H1 (cell line): ENCODE measurements at regions of chr1 and their contacts with region 1.

Region 1: GRCh38 chr1:145891587-145892485 is 6.2 kb upstream of the ANKRD35 start:
- DNase-seq: peak; percentile 94 to 96
- H3K4me3 ChIP-seq: peak overlapping the region in 3 of 4 experiments; percentile 2 to 48 (median 3); a peak in 4 of 8 replicates
- H3K27ac ChIP-seq: no peak overlapping the region
- H3K4me1 ChIP-seq: peaks cover 0 to 6% (median 4%) of the 10 kb centered on the region in 4 experiments; a peak in 3 of 7 replicates
- H3K27me3 ChIP-seq: no peaks in the 10 kb centered on the region
- CTCF ChIP-seq: peak; percentile 84 to 99 (median 99)
- EP300 ChIP-seq: no peak
- POLR2A ChIP-seq: peak in 1 of 2 experiments; percentile 27; a peak in 1 of 3 replicates
- RAD21 ChIP-seq: peak; percentile 96 to 99

Region 2: DNA sequence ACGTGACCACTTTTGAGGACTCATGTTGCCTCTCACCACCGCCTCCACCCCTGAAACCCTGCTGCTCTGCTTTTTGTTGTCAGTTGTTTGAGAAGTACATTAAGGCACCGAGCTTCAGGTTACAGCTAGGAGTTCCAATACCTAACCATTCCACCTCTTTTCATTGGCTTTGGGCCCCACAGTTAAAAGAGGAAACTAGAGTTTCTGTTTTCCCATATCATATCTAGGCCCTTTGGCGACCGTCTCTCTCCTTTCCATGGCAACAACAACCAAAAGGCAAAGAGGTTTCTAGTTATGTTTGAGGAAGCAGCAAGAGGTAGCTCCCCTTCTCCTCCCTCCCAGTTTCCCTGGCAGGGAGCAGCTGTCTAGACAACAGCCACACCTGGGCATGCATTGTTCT is 12.1 kb before region 1 on chr1:
- CTCF ChIA-PET with region 1: interaction called, 62 read pairs
- POLR2A ChIA-PET with region 1: interaction called, 4 read pairs
- DNase-seq: no peak
- H3K4me3 ChIP-seq: no peak overlapping the region
- H3K27ac ChIP-seq: no peak overlapping the region
- H3K4me1 ChIP-seq: peaks cover 0 to 10% (median 6%) of the 10 kb centered on the region in 4 experiments; a peak in 4 of 7 replicates
- H3K27me3 ChIP-seq: peaks cover 0 to 12% (median 8%) of the 10 kb centered on the region in 4 experiments; a peak in 6 of 7 replicates
- CTCF ChIP-seq: no peak
- EP300 ChIP-seq: no peak
- POLR2A ChIP-seq: no peak
- RAD21 ChIP-seq: no peak

Region 3: GRCh38 chr1:145927063-145927886 is 35.4 kb after region 1 on chr1 and contains the start of gene RBM8A:
- CTCF ChIA-PET with region 1: interaction called, 16 read pairs
- POLR2A ChIA-PET with region 1: interaction called, 5 read pairs
- DNase-seq: peak; percentile 85 to 91
- H3K4me3 ChIP-seq: peak within 1 kb of the TSS; percentile 81 to 97 (median 92)
- H3K27ac ChIP-seq: peak within 1 kb of the TSS; percentile 90
- H3K4me1 ChIP-seq: peaks cover 0 to 4% (median 2%) of the 10 kb centered on the region in 4 experiments; a peak in 4 of 7 replicates
- H3K27me3 ChIP-seq: no peaks in the 10 kb centered on the region
- CTCF ChIP-seq: peak; percentile 27 to 61 (median 47); a peak in 3 of 4 replicates
- EP300 ChIP-seq: no peak
- POLR2A ChIP-seq: peak; percentile 88 to 92
- RAD21 ChIP-seq: no peak
- total RNA-seq, gene RBM8A: 216 and 222 TPM in 2 replicates

Region 4: DNA sequence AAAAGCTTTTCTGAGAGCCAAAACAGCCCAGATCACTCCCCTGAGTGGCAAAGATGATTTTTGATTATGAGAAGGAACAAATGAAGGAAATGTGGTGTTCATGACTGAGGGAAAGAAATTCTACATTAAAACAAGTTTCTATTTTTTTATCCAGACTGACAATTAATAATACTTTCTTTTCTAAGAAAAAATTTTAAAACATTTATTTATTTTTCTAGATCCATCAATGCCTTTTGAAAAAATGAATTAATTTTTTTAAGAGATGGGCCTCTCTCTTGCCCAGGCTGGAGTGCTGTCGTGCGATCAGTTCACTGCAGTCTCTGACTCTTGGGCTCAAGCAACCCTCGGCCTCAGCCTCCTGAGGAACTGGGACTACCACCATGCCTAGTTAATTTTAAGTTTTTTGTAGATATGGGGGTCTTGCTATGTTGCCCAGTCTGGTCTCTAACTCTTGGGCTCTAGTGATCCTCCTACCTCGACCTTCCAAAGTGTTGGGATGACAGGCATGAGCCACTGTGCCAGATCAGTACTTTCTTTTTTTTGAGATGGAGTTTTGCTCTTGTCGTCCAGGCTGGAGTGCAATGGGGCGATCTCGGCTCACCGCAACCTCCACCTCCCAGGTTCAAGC is 115.8 kb after region 1 on chr1:
- CTCF ChIA-PET with region 1: interaction called, 17 read pairs
- POLR2A ChIA-PET with region 1: no interaction called
- DNase-seq: no peak
- H3K4me3 ChIP-seq: no peak overlapping the region
- H3K27ac ChIP-seq: no peak overlapping the region
- H3K4me1 ChIP-seq: no peaks in the 10 kb centered on the region; a peak in 1 of 7 replicates
- H3K27me3 ChIP-seq: no peaks in the 10 kb centered on the region
- CTCF ChIP-seq: no peak
- EP300 ChIP-seq: no peak
- POLR2A ChIP-seq: no peak
- RAD21 ChIP-seq: no peak